Gastrocnemius medialis (tissue), 4 donors: ENCODE measurements at regions of chr6 and their contacts with region 1.

Region 1: GRCh38 chr6:156776840-156777576 is at the start of gene ARID1B:
- DNase-seq: peak; percentile 74 to 84
- ATAC-seq: peak; percentile 45 to 55
- H3K4me3 ChIP-seq: peak within 1 kb of the TSS; percentile 76 to 89 (median 81)
- H3K27ac ChIP-seq: peak within 1 kb of the TSS; percentile 96 to 98 (median 98)
- H3K4me1 ChIP-seq: peaks cover 31 to 38% of the 10 kb centered on the region in 2 donors
- H3K27me3 ChIP-seq: no peaks in the 10 kb centered on the region
- CTCF ChIP-seq: no peak
- POLR2A ChIP-seq: peak; percentile 65 to 69
- total RNA-seq, gene ARID1B: 54.9 to 75.3 (median 62.0) TPM

Region 2: GRCh38 chr6:156250593-156250992 is 526.4 kb before region 1 on chr6:
- in situ Hi-C with region 1: no loop called
- intact Hi-C with region 1: no loop called
- DNase-seq: no peak
- ATAC-seq: no peak
- H3K4me3 ChIP-seq: no peak overlapping the region
- H3K27ac ChIP-seq: no peak overlapping the region
- H3K4me1 ChIP-seq: no peaks in the 10 kb centered on the region
- H3K27me3 ChIP-seq: no peaks in the 10 kb centered on the region
- CTCF ChIP-seq: no peak
- POLR2A ChIP-seq: no peak

Region 3: DNA sequence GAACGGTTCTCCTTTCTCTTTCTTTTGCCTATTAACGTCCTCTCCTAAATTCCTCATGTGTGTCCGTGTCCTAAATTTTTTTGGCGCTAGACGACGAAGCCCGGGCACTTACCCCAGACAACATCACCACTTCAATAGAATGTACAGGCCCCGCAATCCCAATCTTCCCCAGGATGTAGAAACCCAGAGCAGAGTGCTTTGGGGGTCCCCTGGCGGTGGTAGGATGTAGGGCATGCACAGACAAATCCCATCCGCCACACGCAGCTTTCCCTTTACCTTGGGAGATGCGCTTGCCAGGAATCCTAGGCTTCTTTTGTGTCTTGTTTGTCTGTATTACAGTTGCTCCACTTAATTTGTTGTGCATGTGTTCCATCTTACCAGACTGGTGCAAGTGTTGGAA is 417.1 kb before region 1 on chr6:
- in situ Hi-C with region 1: no loop called
- intact Hi-C with region 1: no loop called
- DNase-seq: no peak
- ATAC-seq: no peak
- H3K4me3 ChIP-seq: no peak overlapping the region
- H3K27ac ChIP-seq: no peak overlapping the region
- H3K4me1 ChIP-seq: no peaks in the 10 kb centered on the region
- H3K27me3 ChIP-seq: no peaks in the 10 kb centered on the region
- CTCF ChIP-seq: no peak
- POLR2A ChIP-seq: no peak

Region 4: DNA sequence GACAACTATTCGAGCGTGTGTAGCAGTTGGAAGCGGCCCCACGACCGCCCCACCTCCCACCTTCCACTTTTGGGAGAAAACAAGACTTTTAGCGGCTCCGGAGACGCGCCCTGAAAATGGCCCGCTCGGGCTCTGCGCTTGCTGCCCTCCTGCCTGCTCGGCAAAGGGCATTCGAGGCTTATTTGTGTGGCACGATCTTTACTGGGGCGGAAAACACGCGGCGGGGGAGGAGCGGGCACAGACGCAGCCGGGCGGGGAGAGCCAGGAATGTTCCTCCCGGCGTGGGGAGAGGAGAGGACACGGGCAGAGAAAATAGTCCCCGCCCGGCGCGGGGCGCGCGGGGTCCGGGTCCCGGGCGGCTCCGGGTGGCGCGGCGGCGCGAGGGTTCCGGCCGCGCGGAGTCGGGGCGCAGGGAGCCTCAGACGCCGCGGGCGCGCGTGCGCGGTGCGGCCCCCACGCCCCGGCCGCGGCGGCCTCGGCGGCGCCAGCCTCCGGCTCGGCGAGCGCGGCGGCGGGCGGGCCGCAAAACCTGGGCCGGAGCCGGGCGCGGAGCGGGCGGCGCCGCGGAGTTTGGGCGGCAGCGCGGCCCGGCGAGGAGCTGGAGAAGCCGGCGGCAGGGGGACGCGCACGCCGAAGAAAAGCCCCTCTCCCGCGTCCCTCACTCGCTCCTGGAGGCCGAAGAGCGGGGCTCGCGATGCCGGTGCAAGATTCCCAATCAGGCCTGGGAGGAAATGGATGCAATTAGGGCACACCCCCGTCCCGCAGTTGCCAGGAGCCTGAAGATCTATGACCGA is 89.8 kb before region 1 on chr6:
- in situ Hi-C with region 1: loop called in 2 of 4 experiments (anchors 10 kb)
- intact Hi-C with region 1: loop called (anchors 1 kb)
- DNase-seq: peak; percentile 84 to 90
- ATAC-seq: peak; percentile 81 to 84
- H3K4me3 ChIP-seq: peak overlapping the region; percentile 71 to 91 (median 86)
- H3K27ac ChIP-seq: peak overlapping the region; percentile 96 to 99 (median 99)
- H3K4me1 ChIP-seq: peaks cover 7 to 13% of the 10 kb centered on the region in 2 donors
- H3K27me3 ChIP-seq: no peaks in the 10 kb centered on the region
- CTCF ChIP-seq: peak in 1 of 5 experiments; percentile 10
- POLR2A ChIP-seq: peak; percentile 75 to 85

Region 5: GRCh38 chr6:156828280-156828703 is 51.3 kb after region 1 on chr6:
- in situ Hi-C with region 1: no loop called
- intact Hi-C with region 1: loop called (anchors 5 kb)
- DNase-seq: peak; percentile 76 to 93
- ATAC-seq: peak; percentile 87 to 89
- H3K4me3 ChIP-seq: peak overlapping the region in 2 of 4 donors; percentile 17 to 21
- H3K27ac ChIP-seq: peak overlapping the region; percentile 89 to 95 (median 91)
- H3K4me1 ChIP-seq: peaks cover 80 to 83% of the 10 kb centered on the region in 2 donors
- H3K27me3 ChIP-seq: no peaks in the 10 kb centered on the region
- CTCF ChIP-seq: no peak
- POLR2A ChIP-seq: peak; percentile 54 to 75

Region 6: DNA sequence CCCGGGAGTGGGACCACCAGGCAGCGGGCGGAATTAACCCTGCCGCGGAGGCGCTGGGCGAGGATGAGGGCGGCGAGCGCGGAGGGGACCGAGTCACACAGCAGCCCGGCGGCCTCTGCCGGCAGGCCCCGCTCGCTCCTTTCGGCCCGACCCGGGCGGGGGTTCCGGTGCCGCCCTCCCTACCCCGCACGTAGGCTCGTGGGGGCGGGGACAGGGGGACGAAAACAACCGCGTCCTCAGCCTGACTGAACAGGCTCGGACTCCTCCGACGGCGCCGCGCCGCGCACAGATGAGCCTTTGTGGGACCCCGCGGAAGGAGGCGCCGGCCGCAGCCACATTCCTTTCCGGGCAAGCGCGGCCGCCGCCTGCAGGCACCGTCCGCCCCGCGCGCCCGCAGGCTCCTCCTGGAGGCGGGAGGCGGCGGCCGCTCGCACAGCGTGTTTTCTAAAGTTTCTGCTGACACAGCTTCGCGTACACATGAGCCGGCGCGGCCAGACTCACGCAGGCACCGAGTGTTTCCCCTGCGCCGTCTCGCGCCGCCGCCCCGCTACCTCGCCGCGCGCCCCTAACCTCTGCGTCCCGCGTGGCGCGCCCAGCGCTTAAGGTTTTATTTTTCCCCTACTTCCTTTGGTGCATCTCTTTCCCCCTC is 244.5 kb after region 1 on chr6:
- in situ Hi-C with region 1: loop called in 2 of 4 experiments (anchors 5 to 10 kb)
- intact Hi-C with region 1: loop called (anchors 1 kb)
- DNase-seq: peak; percentile 91
- ATAC-seq: peak; percentile 76 to 80
- H3K4me3 ChIP-seq: peak overlapping the region; percentile 81 to 94 (median 86)
- H3K27ac ChIP-seq: peak overlapping the region; percentile 97 to 100 (median 98)
- H3K4me1 ChIP-seq: peaks cover 50 to 57% of the 10 kb centered on the region in 2 donors
- H3K27me3 ChIP-seq: no peaks in the 10 kb centered on the region
- CTCF ChIP-seq: peak; percentile 26 to 53 (median 48)
- POLR2A ChIP-seq: peak; percentile 94 to 98

Region 7: DNA sequence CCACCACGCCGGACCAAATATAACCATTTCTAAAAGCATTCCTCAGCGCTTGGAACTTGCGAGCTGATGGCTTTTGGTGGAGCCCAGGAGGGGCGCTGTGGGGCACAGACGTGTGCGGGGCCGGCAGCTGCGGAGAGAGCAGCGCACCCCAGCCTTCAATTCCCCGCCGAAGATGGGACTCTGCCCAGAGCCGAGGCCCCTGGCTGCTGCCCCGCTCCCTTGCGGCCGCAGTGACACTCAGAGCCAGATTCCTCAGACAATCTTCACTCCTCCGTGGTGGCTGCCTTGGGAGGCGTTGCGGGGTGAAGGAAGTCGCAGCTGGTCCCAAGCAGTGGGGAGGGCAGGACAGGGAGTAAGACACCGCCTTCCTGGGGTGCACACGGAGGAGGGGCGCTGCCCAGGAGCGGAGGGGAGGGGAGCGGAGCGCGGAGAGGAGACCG is 458.6 kb after region 1 on chr6:
- in situ Hi-C with region 1: no loop called
- intact Hi-C with region 1: loop called (anchors 2 kb)
- DNase-seq: peak in 1 of 2 donors; percentile 42
- ATAC-seq: peak; percentile 57 to 64
- H3K4me3 ChIP-seq: peak overlapping the region; percentile 57 to 70 (median 61)
- H3K27ac ChIP-seq: peak overlapping the region; percentile 8 to 53 (median 49)
- H3K4me1 ChIP-seq: peaks cover 19 to 26% of the 10 kb centered on the region in 2 donors
- H3K27me3 ChIP-seq: peaks cover 0 to 15% (median 0%) of the 10 kb centered on the region in 3 donors
- CTCF ChIP-seq: peak; percentile 25 to 77 (median 53)
- POLR2A ChIP-seq: no peak

Region 8: DNA sequence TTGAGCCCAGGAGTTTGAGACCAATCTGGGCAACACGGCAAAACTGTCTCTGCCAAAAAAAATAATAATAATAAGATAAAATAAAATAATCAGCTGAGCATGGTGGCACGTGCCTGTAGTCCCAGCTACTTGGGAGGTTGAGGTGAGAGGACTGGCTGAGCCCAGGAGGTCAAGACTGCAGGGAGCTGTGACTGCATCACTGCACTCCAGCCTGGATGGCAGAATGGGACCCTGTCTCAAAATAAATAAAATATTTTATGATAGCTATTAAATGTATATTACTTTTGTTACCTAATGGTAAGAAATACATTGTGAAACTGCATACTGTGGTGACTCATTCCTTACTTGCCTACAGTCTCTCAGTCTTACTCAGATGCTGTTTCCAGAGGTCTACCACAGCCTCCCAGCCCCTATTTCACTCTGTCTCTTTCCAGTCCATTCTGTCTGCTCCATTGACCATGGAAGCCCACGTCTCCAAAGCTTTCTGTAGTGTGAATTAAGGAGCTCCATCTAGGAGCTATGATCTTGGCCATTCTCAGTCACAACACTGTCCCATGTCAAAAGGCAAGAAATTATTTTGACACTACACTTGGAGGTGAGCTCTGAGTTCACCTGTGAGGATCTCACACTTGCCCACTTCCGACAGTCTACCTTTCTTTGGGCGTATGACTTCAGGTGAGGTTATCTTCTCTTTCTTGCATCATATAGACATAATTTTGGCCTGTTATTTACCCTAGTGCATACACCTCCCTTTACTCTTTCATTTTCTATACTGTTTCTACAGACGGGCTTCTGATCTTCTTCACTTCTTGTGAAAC is 1023.6 kb after region 1 on chr6:
- in situ Hi-C with region 1: no loop called
- intact Hi-C with region 1: no loop called
- DNase-seq: no peak
- ATAC-seq: no peak
- H3K4me3 ChIP-seq: no peak overlapping the region
- H3K27ac ChIP-seq: no peak overlapping the region
- H3K4me1 ChIP-seq: no peaks in the 10 kb centered on the region
- H3K27me3 ChIP-seq: no peaks in the 10 kb centered on the region
- CTCF ChIP-seq: no peak
- POLR2A ChIP-seq: no peak